ENCODE measurements at regions of chr3 and their contacts with region 1.

Region 1: DNA sequence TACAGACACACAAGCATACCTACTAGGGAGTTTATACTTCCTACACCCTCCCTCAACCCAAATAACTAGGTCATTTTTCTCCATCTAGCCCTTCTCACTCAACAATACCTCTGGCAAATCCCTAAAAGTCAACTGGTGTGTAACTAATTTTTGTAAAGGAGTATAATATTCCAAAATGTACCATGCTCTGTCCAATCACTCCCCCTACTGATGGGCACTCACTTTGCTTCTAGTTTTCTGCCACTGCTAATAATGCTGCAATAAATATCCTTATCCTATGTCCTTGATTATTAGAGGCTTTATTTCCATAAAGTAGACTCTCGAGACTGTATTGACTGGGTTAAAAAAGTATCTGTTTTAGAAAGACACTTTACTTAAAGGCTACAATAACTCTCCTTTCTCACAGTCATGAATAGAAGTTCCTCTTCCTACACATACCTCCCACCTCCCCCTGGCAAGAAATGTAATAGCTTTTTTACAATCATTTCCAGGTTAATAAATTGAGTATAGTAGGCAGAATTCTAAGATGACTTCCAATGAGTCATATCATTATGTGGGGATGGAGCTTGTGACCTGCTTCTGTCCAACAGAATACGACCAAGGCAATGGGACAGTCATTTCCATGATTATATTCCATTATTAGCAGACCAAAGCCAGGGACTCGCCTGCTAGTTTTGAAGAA is 30.0 kb downstream of the SHQ1 start:
- DNase-seq: no peak
- H3K4me3 ChIP-seq: no peak overlapping the region
- H3K27ac ChIP-seq: no peak overlapping the region
- H3K4me1 ChIP-seq: peaks cover 7% of the 10 kb centered on the region
- H3K27me3 ChIP-seq: no peaks in the 10 kb centered on the region
- CTCF ChIP-seq: peak in 1 of 3 donors; percentile 42
- EP300 ChIP-seq: no peak
- POLR2A ChIP-seq: no peak

Region 2: DNA sequence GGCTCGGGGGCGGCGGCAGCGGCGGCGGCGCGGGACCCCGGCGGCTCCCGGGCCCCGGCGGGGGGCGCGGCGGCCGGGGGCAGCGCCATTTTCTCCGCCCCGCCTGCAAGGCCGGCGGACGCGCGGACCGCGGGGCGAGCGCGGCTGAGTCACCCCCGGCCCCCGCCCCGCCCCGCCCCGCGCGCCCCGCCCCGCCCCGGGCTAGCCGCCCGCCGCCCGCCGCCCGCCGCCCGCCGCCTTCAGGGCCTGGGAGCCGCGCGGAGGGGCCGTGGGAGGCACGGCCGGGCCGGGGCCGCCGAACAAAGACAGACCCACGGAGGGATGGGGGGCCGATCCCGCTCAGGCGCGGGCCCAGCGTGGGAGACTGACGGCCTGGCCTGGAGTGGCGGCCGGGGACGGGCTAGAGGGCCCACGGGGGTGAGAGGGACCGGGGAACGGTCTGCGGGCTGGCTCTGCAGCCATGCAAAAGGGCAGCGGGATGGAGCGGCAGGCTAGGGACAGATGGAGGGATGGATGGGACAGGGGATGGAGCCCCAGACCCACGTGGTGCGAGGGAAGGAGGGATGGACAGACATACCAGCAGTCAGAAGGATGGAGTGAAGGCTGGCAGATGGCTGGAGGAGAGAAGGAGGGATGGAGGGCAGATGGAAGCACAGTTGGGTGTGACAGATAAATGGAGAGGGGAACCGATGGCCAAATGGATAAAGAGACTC is 1092.8 kb before region 1 on chr3 and contains the start of gene EIF4E3:
- intact Hi-C with region 1: loop called in 3 of 4 experiments (anchors 5 to 10 kb)
- DNase-seq: peak in 4 of 5 donors; percentile 39 to 72 (median 56)
- H3K4me3 ChIP-seq: peak within 1 kb of the TSS; percentile 90
- H3K27ac ChIP-seq: peak within 1 kb of the TSS; percentile 76 to 80
- H3K4me1 ChIP-seq: peaks cover 6% of the 10 kb centered on the region
- H3K27me3 ChIP-seq: no peaks in the 10 kb centered on the region
- CTCF ChIP-seq: no peak
- EP300 ChIP-seq: no peak
- POLR2A ChIP-seq: no peak
- total RNA-seq, gene EIF4E3: 13.0 to 51.7 (median 42.5) TPM

Region 3: DNA sequence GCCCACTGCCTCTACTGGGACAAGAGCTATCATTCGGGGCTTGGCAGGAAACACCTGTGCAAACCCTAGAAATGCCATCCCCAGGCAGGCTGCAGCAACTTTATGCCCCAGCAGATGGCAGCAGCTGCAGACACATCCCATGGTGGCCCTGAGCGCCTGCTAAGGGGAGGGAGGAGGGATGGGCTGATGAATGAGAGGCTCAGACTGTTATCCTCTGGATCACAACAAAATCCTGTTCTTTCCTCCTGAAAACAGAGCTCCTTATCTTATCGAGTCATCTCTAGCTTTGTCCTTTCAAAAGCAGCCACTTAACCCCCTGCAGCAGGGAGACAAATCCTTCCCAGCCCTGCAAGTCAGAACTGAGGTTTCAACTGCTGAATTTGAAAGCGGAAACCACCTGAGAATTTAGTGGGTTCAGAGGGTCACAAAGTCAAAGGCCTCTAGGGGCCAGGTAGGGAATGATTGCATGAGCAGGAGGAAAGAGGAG is 942.7 kb before region 1 on chr3:
- intact Hi-C with region 1: loop called in 2 of 4 experiments (anchors 5 to 10 kb)
- DNase-seq: peak; percentile 53 to 81 (median 67)
- H3K4me3 ChIP-seq: no peak overlapping the region
- H3K27ac ChIP-seq: no peak overlapping the region
- H3K4me1 ChIP-seq: peaks cover 4% of the 10 kb centered on the region
- H3K27me3 ChIP-seq: no peaks in the 10 kb centered on the region
- CTCF ChIP-seq: peak; percentile 33 to 64 (median 39)
- EP300 ChIP-seq: no peak
- POLR2A ChIP-seq: no peak

Region 4: GRCh38 chr3:71955240-71956068 is 862.8 kb before region 1 on chr3:
- intact Hi-C with region 1: loop called in 3 of 4 experiments (anchors 5 to 10 kb)
- DNase-seq: peak; percentile 78 to 85 (median 85)
- H3K4me3 ChIP-seq: no peak overlapping the region
- H3K27ac ChIP-seq: no peak overlapping the region
- H3K4me1 ChIP-seq: no peaks in the 10 kb centered on the region
- H3K27me3 ChIP-seq: no peaks in the 10 kb centered on the region
- CTCF ChIP-seq: peak; percentile 47 to 56 (median 48)
- EP300 ChIP-seq: no peak
- POLR2A ChIP-seq: no peak